ENCODE measurements at regions of chr15 and their contacts with region 1.

Region 1: DNA sequence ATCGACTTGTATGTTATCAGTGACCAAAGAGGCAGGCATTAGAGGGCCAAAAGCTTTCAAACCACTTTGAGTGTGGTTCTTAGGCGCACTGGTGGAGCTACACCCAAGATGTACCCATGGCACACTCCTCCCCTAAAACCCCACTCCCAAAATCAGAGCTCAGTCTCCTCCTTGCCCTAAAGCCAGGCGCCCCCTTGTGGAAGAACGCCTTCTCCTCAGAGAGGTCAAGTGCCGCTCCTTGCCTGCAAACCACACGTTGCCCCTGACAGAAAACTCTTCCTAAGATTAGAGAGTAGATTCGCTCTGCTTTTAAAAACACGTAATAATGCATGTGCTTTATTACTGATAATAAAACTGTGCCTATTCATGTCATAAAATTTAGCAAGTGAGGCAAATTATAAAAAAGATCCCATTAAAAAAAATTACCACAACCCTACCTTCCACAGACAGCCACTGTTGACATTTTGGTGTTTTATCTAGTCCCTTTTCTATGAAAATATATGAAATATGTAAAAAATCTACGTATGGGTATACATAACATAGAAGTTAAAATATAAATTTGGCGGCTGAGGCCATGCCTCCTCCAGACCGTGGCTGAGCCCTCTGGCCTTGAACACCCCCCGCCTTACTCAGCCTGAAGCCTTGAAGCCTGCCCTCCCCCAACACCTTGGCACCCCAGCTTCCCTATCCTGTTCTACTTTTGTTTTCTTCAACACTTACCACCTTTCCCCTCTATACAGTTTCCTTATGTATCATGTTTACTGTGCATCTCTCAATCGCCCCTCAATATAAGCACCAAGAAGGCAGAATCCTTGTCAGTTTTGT is 33.5 kb downstream of the BCL2L10 start:
- DNase-seq: peak; percentile 45 to 79 (median 72)
- H3K4me3 ChIP-seq: peak overlapping the region in 2 of 59 donors; percentile 0 to 25
- H3K27ac ChIP-seq: no peak overlapping the region
- H3K27me3 ChIP-seq: no peaks in the 10 kb centered on the region
- CTCF ChIP-seq: peak; percentile 49 to 96 (median 82)

Region 2: DNA sequence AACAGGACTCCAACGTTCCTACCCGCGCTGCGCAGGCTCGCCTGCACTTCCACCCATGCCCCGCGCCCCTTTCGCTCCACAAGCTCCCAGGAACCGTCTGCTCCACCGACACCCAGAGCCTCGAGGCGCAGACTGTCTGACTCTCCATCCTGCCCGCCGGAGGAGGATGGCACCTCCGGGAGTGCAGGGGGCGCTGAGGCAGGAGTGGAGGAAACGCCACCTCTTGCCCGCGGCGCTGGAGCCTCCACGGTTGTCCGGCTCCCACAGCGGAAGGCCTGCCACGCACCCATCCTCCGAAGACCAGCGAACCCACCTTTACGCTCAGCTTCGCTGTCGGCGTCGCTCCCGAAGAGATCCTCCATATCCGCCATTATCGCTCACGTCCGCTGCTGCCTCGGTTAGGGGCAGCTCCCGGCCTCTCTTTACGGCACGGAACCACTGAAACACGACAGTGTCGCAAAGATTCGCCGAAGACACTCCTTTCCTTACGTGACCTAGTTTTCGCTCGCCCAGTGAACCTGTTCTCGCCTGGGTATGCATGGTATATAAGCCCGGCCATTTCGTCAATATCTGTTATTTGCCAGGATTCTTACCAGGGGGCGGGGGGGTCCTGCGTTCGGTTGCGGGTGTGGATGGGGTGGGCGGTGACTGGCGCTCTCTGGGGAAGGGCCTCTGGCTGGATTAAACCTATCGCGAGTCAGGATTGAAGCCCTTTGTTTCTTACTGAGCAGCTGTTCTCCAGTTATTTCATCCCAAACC is 107.5 kb before region 1 on chr15 and contains the start of gene LEO1:
- intact Hi-C with region 1: loop called in 1 of 2 experiments (anchors 5 kb)
- DNase-seq: peak; percentile 86 to 95 (median 92)
- H3K4me3 ChIP-seq: peak within 1 kb of the TSS; percentile 57 to 99 (median 91)
- H3K27ac ChIP-seq: peak within 1 kb of the TSS; percentile 58 to 98 (median 94)
- H3K27me3 ChIP-seq: no peaks in the 10 kb centered on the region
- CTCF ChIP-seq: peak in 55 of 56 donors; percentile 16 to 73 (median 55)
- total RNA-seq, gene LEO1: 14.3 to 35.5 (median 23.9) TPM

Region 3: DNA sequence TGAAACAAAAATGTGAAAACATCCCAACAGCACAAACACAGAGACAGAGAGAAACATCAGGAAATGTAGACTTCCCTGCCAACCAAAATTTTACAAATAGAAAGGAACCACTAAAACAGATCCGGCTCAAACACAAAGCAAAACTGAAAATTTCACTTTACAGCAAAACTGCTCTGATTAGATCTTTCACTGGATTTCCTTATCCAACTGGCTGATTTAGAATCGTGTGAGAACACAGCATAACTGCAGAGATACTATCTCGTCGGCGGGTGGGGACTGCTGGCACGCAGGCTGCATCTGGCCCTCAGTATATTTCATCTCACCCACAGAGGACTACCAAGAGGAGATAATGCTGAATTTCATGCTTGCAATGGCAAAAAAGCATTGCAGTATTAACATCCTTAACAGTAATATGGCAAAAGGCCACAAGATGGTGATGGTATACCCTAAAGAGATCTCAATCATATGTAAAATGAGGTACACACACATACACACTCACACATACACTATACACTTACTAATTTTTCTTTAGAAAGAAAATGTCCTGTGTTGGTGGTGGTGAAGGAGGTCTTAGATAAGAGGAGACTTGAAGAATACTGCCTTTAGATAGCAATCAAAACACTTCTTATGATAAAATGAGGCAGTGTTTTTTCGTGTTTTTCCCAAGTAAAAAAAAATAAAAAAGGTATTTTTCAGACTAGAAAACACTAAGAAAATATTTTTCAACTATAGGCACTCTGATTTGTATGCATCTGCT is 96.9 kb before region 1 on chr15:
- intact Hi-C with region 1: loop called in 1 of 2 experiments (anchors 10 kb)
- DNase-seq: peak in 1 of 10 donors; percentile 36
- H3K4me3 ChIP-seq: peak overlapping the region in 54 of 59 donors; percentile 2 to 60 (median 28)
- H3K27ac ChIP-seq: peak overlapping the region in 31 of 59 donors; percentile 3 to 66 (median 38)
- H3K27me3 ChIP-seq: no peaks in the 10 kb centered on the region
- CTCF ChIP-seq: peak in 53 of 56 donors; percentile 17 to 71 (median 46)

Region 4: GRCh38 chr15:52018693-52019387 is 60.2 kb before region 1 on chr15 and contains the start of gene MAPK6:
- intact Hi-C with region 1: loop called (anchors 5 kb)
- DNase-seq: peak; percentile 85 to 93 (median 91)
- H3K4me3 ChIP-seq: peak within 1 kb of the TSS; percentile 59 to 90 (median 79)
- H3K27ac ChIP-seq: peak within 1 kb of the TSS; percentile 93 to 99 (median 98)
- H3K27me3 ChIP-seq: no peaks in the 10 kb centered on the region
- CTCF ChIP-seq: peak in 19 of 56 donors; percentile 8 to 47 (median 20)
- total RNA-seq, gene MAPK6: 35.9 to 84.3 (median 57.8) TPM

Region 5: DNA sequence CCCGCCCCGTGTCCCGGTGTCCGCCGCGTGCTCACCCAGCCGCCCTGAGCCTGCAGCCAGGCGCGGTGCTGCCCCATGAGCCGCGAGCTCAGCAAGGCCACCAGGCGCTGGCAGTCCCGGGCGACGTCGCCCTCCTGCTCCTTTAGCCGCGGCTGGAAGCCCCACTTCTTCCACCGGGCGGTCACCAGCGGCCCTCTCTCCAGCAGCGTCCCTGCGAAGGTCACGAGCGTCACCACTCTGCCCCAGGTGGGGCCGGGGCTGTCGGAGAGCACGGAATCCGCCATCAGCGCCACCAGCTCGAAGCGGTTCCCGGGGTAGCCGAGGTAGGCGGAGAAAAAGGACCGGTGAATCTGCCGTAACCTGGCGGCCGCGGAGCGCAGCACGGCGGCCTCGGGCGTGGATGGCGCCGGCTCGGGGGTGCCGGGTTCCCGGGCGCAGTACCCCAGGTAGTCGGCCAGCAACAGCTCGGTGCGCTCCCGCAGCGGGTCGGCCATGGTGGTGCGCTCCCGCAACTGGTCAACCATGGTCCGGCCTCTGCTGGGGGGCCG is 33.2 kb after region 1 on chr15:
- intact Hi-C with region 1: loop called in 1 of 2 experiments (anchors 5 kb)
- DNase-seq: peak in 2 of 10 donors; percentile 41 to 53
- H3K4me3 ChIP-seq: peak overlapping the region; percentile 28 to 71 (median 53)
- H3K27ac ChIP-seq: peak overlapping the region in 3 of 59 donors; percentile 8 to 37 (median 11)
- H3K27me3 ChIP-seq: peaks cover 0 to 22% (median 0%) of the 10 kb centered on the region in 45 donors
- CTCF ChIP-seq: no peak

Region 6: DNA sequence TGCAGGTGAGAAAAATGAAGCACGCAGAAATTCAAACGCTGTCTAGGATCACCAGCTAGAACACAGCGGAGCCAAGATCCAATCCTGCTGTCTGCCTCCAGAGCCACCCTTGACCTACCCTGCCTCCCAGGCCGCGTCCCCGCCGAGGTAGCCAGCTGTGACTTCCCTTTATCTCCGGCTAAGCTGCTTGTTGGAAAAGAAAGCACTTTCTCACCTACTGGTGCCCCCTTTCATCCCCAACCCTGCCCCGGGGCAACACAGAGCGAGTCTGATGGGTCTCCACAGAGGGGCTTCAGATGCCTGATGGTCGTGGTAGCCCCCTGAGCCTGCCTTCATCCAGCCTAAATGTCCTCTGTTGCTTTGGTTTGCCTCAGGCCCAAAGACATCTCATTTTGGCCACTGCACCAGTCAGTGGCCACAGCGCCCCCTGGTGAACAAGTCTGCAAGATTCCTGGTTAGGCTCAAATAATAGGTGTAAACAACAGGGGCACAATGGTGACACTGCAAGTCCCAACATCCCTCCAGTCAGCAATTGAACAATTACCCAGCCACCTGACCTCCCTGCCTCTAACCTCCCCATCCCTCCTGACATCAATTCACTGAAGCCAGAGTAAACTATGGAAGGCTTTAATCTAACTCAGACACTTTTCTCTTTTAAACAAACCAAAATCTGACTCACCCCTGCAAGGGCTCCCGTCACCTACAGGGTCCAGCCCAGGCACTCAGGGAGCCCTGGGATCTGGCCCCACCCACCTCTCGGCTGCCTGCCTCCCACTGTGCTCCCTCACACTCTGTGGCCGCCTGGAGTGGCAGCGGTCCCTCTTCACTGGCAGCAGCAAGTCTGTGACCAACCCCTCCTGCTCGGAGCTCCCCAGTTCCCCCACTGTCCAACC is 60.8 kb after region 1 on chr15:
- intact Hi-C with region 1: loop called in 1 of 2 experiments (anchors 5 kb)
- DNase-seq: peak; percentile 69 to 88 (median 78)
- H3K4me3 ChIP-seq: no peak overlapping the region
- H3K27ac ChIP-seq: peak overlapping the region in 16 of 59 donors; percentile 4 to 57 (median 30)
- H3K27me3 ChIP-seq: no peaks in the 10 kb centered on the region
- CTCF ChIP-seq: peak; percentile 70 to 91 (median 82)

Measured in dorsolateral prefrontal cortex (tissue), 120 donors.